ENCODE measurements at regions of chr1 and their contacts with region 1.

Region 1: GRCh38 chr1:224116131-224116530 is 2.2 kb downstream of the FBXO28 start:
- DNase-seq: peak in 2 of 35 experiments; percentile 1 to 68
- ATAC-seq: peak; percentile 18 to 26 (median 25)
- H3K4me3 ChIP-seq: no peak overlapping the region
- H3K4me3 Mint-ChIP-seq: peak overlapping the region; percentile 45 to 68 (median 53)
- H3K27ac ChIP-seq: no peak overlapping the region
- H3K27ac Mint-ChIP-seq: peak overlapping the region; percentile 73 to 91
- H3K4me1 ChIP-seq: peaks cover 14 to 17% of the 10 kb centered on the region in 2 experiments
- H3K4me1 Mint-ChIP-seq: peaks cover 40 to 50% (median 41%) of the 10 kb centered on the region in 3 donors
- H3K27me3 ChIP-seq: no peaks in the 10 kb centered on the region
- H3K27me3 Mint-ChIP-seq: peaks cover 2 to 4% of the 10 kb centered on the region in 2 donors

Region 2: GRCh38 chr1:224192082-224192788 is 76.1 kb after region 1 on chr1:
- CTCF ChIA-PET with region 1: no interaction called
- POLR2A ChIA-PET with region 1: interaction called in 1 of 2 experiments, 11 read pairs
- DNase-seq: no peak
- ATAC-seq: no peak
- H3K4me3 ChIP-seq: no peak overlapping the region
- H3K4me3 Mint-ChIP-seq: no peak overlapping the region
- H3K27ac ChIP-seq: no peak overlapping the region
- H3K27ac Mint-ChIP-seq: peak overlapping the region; percentile 28 to 46
- H3K4me1 ChIP-seq: peaks cover 0 to 2% of the 10 kb centered on the region in 2 experiments
- H3K4me1 Mint-ChIP-seq: peaks cover 7 to 37% (median 24%) of the 10 kb centered on the region in 3 donors
- H3K27me3 ChIP-seq: no peaks in the 10 kb centered on the region
- H3K27me3 Mint-ChIP-seq: no peaks in the 10 kb centered on the region

Region 3: DNA sequence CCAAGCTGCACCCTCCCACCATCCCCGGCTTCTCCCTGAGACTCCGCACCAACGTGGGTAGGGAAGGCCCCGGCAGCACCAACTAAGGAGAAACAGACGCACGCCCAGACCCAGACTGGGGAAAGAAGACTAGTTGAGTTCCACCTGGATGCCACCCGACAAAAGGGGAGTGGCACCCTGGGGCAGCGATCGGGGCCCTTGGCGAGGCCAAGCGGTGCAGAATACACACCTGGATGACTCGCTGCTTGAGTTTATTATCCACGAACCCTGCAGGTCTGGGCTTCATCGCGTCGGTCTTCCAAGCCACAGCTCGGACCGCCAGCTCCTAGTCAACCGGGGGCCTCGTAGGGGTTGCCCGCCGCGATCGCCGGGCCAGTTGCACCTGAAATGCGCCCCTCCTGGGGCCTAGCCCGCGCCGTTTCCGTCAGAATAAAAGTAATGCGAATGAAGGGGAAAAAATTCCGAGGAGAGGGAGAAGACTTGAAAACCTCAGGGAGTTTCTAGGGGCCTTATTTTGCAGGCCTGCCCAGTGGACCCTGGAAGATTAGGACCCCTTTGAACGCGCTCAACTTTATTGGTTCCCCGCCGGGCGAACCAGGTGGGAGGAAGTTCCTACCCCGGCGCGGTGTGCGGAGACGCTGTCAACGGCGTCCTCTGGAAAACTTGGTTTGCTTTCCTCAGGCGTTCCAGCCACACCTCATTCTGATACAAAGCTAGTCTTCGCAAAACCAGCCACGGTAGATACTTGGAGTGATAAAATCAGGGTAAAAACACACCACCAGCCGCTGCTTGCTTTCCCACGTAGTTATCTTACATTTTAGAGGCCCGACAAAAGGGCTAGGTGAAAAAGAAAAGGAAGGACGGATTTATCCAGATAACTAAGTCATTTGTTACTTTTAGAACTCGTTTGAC is 214.0 kb after region 1 on chr1 and contains the start of gene NVL:
- CTCF ChIA-PET with region 1: interaction called, 3 to 17 read pairs
- POLR2A ChIA-PET with region 1: interaction called in 1 of 2 experiments, 3 read pairs
- DNase-seq: peak; percentile 67 to 87 (median 75)
- ATAC-seq: peak; percentile 93 to 95 (median 94)
- H3K4me3 ChIP-seq: peak within 1 kb of the TSS; percentile 81 to 98
- H3K4me3 Mint-ChIP-seq: peak within 1 kb of the TSS; percentile 95 to 98 (median 96)
- H3K27ac ChIP-seq: peak within 1 kb of the TSS; percentile 94
- H3K27ac Mint-ChIP-seq: peak within 1 kb of the TSS; percentile 98 to 100
- H3K4me1 ChIP-seq: peaks cover 17 to 21% of the 10 kb centered on the region in 2 experiments
- H3K4me1 Mint-ChIP-seq: peaks cover 43 to 61% (median 54%) of the 10 kb centered on the region in 3 donors
- H3K27me3 ChIP-seq: no peaks in the 10 kb centered on the region
- H3K27me3 Mint-ChIP-seq: no peaks in the 10 kb centered on the region
- total RNA-seq, gene NVL: 32.5 to 42.0 (median 37.6) TPM